ENCODE measurements at regions of chr7 and their contacts with region 1.

Region 1: DNA sequence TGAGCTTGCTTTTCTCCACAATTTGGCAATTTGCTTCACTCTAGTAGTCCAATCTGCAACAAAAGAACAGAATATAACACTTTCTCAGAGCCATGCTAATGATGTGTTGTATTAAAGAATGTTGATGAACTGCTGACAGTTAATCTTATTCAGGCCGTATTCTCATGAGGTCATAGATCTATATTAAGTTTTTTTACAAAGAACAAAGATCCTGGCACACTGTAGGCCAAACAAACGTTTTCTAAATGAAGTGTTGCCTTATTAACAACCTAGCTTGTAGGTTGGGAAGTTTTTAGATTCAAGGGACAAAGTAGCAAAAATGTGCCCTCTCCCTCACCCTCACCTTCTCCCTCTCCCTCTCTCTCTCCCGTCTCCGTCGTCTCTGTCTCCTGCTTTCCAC is 6.8 kb downstream of the HILPDA start:
- DNase-seq: no peak
- ATAC-seq: peak; percentile 8 to 14
- H3K4me3 ChIP-seq: no peak overlapping the region
- H3K27ac ChIP-seq: no peak overlapping the region
- H3K4me1 ChIP-seq: peaks cover 21% of the 10 kb centered on the region
- H3K27me3 ChIP-seq: no peaks in the 10 kb centered on the region
- CTCF ChIP-seq: no peak

Region 2: DNA sequence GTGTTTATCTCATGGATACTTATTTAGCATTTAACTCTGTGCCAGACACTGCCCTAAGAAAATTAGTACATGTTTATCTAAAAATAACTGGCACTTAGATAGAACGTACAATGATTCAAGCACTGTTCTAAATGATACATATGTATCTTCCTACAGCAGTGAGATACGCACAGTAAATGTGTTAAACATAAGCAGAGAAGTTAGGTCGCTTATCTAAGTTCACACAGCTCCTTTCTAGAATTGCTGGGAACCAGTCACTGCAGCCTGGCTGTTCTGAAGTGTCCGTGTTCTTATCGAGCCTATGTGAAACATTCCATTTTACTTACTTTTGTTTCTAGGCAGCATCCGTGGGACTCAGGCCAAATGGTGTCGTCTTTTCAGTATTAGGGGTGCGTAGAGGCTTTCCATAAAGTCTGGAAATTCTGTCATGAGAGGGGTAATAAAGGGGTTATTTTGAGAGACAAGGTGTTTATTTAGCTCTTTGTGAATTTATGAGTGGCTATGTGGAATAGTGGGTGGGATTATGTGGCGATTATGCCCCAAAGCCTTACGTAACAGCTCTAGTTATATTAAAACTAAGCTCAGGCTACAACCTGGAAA is 623.5 kb before region 1 on chr7:
- intact Hi-C with region 1: no loop called
- DNase-seq: no peak
- ATAC-seq: peak; percentile 78 to 94
- H3K4me3 ChIP-seq: peak overlapping the region; percentile 24
- H3K27ac ChIP-seq: peak overlapping the region; percentile 51
- H3K4me1 ChIP-seq: peaks cover under 1% of the 10 kb centered on the region
- H3K27me3 ChIP-seq: no peaks in the 10 kb centered on the region
- CTCF ChIP-seq: no peak

Region 3: GRCh38 chr7:128425850-128426249 is 36.6 kb before region 1 on chr7:
- intact Hi-C with region 1: loop called (anchors 5 kb)
- DNase-seq: peak; percentile 71
- ATAC-seq: peak; percentile 84 to 90
- H3K4me3 ChIP-seq: no peak overlapping the region
- H3K27ac ChIP-seq: no peak overlapping the region
- H3K4me1 ChIP-seq: no peaks in the 10 kb centered on the region
- H3K27me3 ChIP-seq: peaks cover 6% of the 10 kb centered on the region
- CTCF ChIP-seq: peak; percentile 95

Measured in lower lobe of right lung (tissue), 2 donors.